Activated CD4-positive, alpha-beta T cell treated with anti-CD3 and anti-CD28 coated beads for 36 hours (primary cell): ENCODE measurements at regions of chr5 and their contacts with region 1.

Region 1: GRCh38 chr5:87121304-87122150 is 146.2 kb upstream of the RASA1 start:
- DNase-seq: peak; percentile 51
- ATAC-seq: peak; percentile 76
- H3K4me3 Mint-ChIP-seq: peak overlapping the region; percentile 26
- H3K27ac Mint-ChIP-seq: peak overlapping the region; percentile 44
- H3K4me1 Mint-ChIP-seq: peaks cover 57% of the 10 kb centered on the region
- H3K27me3 Mint-ChIP-seq: peaks cover 2% of the 10 kb centered on the region

Region 2: GRCh38 chr5:87020099-87020934 is 101.2 kb before region 1 on chr5:
- CTCF ChIA-PET with region 1: no interaction called
- POLR2A ChIA-PET with region 1: no interaction called
- intact Hi-C with region 1: loop called (anchors 5 kb)
- DNase-seq: peak; percentile 56
- ATAC-seq: peak; percentile 91
- H3K4me3 Mint-ChIP-seq: no peak overlapping the region
- H3K27ac Mint-ChIP-seq: peak overlapping the region; percentile 39
- H3K4me1 Mint-ChIP-seq: peaks cover 21% of the 10 kb centered on the region
- H3K27me3 Mint-ChIP-seq: no peaks in the 10 kb centered on the region

Region 3: GRCh38 chr5:87081511-87082372 is 39.8 kb before region 1 on chr5:
- CTCF ChIA-PET with region 1: no interaction called
- POLR2A ChIA-PET with region 1: no interaction called
- intact Hi-C with region 1: loop called in 1 of 2 experiments (anchors 5 kb)
- DNase-seq: peak; percentile 49
- ATAC-seq: peak; percentile 59
- H3K4me3 Mint-ChIP-seq: peak overlapping the region; percentile 49
- H3K27ac Mint-ChIP-seq: peak overlapping the region; percentile 76
- H3K4me1 Mint-ChIP-seq: peaks cover 40% of the 10 kb centered on the region
- H3K27me3 Mint-ChIP-seq: no peaks in the 10 kb centered on the region

Region 4: DNA sequence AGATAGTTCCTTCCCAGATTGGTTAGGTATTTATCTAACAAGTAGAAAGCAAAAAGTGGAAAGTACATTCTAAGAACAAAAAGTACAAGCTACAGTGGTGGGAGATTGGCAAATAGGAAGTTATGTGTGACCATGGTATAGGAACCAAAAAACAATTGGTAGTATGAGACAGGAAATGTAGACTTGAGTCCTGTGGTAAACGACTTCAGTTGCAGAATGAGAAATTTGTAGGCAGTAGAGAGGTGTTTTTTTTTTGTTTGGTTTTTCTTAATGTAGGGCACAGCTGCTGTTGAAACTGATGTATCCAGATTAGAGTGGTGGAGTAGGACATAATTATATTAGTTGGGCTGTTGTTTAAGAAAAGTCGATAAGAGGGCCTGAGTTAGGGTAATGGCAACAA is 219.2 kb after region 1 on chr5:
- CTCF ChIA-PET with region 1: no interaction called
- POLR2A ChIA-PET with region 1: no interaction called
- intact Hi-C with region 1: loop called (anchors 2 to 5 kb)
- DNase-seq: no peak
- ATAC-seq: peak; percentile 97
- H3K4me3 Mint-ChIP-seq: peak overlapping the region; percentile 49
- H3K27ac Mint-ChIP-seq: peak overlapping the region; percentile 91
- H3K4me1 Mint-ChIP-seq: peaks cover 20% of the 10 kb centered on the region
- H3K27me3 Mint-ChIP-seq: no peaks in the 10 kb centered on the region